ENCODE measurements at regions of chr3 and their contacts with region 1.

Region 1: DNA sequence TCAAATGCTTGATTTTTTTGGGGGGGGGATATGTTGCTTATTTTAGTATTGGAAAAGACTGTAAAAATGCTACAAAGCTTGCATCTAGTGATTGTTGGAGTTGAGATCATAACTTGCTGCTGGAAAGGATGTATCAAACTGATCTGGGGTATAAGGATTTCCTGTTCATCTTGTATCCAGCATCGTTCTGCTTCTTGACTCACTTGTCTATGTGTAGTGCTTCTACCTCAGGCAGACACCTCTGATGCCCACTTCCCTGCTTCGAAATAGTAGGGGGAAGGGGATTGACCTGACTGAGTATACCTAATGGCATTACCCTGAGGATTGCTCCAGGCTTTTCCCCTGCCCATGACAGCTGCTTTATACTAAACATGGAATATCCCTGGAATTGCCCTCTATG is 42.7 kb downstream of the STT3B start:
- DNase-seq: no peak
- ATAC-seq: no peak
- H3K4me3 ChIP-seq: no peak overlapping the region
- H3K27ac ChIP-seq: no peak overlapping the region
- H3K4me1 ChIP-seq: peaks cover 60% of the 10 kb centered on the region
- H3K27me3 ChIP-seq: no peaks in the 10 kb centered on the region
- CTCF ChIP-seq: no peak

Region 2: DNA sequence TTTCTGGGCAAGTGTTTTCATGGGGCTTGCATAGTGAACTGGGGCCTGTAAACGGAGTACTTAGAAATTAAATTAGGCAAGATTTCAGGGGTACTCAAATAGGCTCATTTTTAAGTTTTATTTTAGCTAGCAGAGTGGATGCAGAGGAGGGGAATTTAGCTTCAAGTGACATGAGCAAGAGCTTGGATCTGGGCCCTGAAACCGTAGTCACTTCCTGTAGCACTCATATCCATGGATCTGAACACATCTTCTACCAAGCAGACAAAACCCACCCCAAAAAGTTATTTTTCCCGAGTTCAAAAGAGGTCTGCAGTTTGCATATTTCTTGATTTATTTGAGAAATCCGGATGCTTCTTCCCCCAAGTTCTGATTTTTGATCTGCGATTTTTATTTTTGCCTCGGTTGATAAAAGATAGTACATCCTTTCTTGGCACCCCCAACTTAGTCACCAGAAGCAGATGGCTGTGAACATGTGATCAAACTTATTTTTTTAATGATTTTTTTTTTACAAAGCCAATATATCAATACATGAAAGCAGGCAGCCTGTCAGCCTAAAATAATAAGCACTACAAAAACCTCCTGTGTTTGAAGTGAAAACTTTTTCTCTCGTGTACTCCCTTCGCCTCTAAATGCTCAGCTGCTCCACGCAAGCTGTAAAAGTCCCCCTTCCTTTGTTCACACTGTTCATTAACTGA is 79.3 kb before region 1 on chr3:
- intact Hi-C with region 1: no loop called
- DNase-seq: no peak
- ATAC-seq: no peak
- H3K4me3 ChIP-seq: no peak overlapping the region
- H3K27ac ChIP-seq: no peak overlapping the region
- H3K4me1 ChIP-seq: no peaks in the 10 kb centered on the region
- H3K27me3 ChIP-seq: no peaks in the 10 kb centered on the region
- CTCF ChIP-seq: no peak

Region 3: DNA sequence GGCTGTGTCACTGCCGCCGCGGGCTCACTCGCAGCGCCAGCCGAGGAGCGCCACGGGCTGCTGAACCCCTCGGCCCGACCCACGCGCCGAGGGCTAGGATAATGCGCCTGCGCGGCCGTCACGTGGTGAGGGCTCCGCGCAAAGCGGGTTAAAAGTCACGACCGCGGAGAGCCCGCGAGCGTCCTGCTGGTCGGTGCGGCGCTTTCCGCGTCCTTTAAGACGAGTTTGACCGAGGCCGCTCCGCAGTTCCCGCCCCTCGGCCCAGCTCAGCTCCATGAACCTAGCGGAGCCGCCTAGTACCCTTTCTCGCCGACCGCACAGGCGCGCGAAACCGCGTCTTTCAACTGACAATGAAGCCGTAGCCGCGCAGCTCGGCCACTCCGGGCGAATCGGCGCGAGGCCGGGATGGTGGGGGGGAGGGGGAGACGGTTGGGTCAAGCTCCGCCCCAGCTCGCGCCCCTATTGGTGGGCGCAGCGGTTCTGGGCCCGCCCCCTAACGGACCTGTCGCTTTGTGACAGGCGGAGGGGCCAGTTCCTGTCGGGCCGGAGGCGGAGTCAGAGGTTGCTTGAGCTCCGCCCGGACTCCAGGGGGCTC is 43.4 kb before region 1 on chr3:
- intact Hi-C with region 1: loop called in 1 of 2 experiments (anchors 5 kb)
- DNase-seq: peak; percentile 99 to 100
- ATAC-seq: peak; percentile 94 to 97 (median 96)
- H3K4me3 ChIP-seq: peak overlapping the region; percentile 88
- H3K27ac ChIP-seq: peak overlapping the region; percentile 99
- H3K4me1 ChIP-seq: peaks cover 27% of the 10 kb centered on the region
- H3K27me3 ChIP-seq: no peaks in the 10 kb centered on the region
- CTCF ChIP-seq: no peak

Region 4: GRCh38 chr3:31622636-31623288 is 47.3 kb after region 1 on chr3:
- intact Hi-C with region 1: no loop called
- DNase-seq: no peak
- ATAC-seq: no peak
- H3K4me3 ChIP-seq: no peak overlapping the region
- H3K27ac ChIP-seq: no peak overlapping the region
- H3K4me1 ChIP-seq: no peaks in the 10 kb centered on the region
- H3K27me3 ChIP-seq: no peaks in the 10 kb centered on the region
- CTCF ChIP-seq: no peak